ENCODE measurements at regions of chr5 and their contacts with region 1.

Region 1: GRCh38 chr5:31809050-31809870 is 170.3 kb downstream of the PDZD2 start:
- DNase-seq: peak; percentile 79
- ATAC-seq: peak; percentile 93

Region 2: DNA sequence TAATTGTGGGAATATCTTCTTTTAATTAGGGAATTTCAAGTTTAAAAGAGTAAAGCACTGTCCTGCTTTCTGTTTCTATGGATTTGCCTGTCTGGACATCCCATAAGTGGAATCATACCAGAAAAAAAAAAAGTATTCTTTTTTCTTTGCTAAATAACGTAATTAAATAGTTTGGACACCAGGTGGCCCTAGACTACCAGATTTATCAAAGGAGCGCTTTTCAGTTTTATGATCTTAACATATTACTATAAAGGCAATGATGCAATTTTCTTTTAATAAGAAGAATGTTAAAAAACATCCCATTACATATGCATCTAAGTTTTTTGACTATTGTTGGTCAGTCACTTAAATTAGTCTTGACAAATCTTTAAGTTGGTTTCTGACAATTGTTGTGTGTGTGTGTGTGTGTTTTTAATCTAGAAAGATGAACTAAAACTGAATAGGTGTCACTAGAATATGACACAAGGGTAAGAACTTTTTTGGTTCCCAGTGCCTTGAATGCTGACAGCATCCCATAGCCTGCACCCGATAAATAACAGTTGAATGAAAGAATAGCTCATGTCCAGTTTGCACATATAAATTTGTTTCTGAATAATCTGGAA is 227.7 kb before region 1 on chr5:
- intact Hi-C with region 1: loop called (anchors 5 kb)
- DNase-seq: no peak
- ATAC-seq: peak; percentile 41